Mammary epithelial cell (primary cell): ENCODE measurements at regions of chr12 and their contacts with region 1.

Region 1: DNA sequence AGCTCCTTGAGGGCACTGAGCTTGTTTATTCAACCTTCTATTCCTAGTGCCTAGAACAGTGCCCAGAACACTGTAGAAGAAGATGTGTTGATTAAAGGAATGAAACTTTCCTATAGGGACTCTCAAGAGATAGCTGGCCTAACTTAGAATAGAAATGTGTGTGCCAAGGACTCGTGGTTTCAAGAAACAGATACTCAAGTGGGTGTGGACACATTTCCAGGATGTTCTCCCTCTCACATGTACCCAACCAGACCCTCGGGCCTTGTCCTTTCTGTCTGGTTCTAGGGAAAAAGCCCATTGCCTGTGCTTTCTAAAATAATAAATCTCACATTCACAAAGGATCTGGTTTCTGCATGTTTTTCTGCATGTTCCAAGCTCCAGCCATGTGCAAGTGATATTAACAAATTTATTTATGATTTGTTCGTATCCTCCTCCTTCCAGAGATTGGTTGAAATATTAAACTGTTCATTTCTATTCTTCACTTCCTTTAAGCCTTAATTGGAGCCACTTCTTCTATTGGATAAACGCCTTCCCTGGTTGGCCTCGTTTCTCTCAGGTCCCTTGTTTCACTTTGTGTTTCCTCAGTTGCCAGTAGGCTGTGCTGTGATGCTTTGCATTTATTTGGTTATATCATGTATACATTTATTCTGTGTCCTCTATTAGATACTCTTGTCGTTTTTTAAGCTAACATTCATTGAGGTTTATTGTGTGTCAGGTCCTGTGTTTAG is 89.8 kb downstream of the CRADD start:
- DNase-seq: peak; percentile 61
- H3K4me3 ChIP-seq: no peak overlapping the region
- H3K27ac ChIP-seq: no peak overlapping the region
- H3K4me1 ChIP-seq: peaks cover 6% of the 10 kb centered on the region
- H3K27me3 ChIP-seq: no peaks in the 10 kb centered on the region
- CTCF ChIP-seq: peak; percentile 63

Region 2: GRCh38 chr12:92987362-92987761 is 779.6 kb before region 1 on chr12:
- CTCF ChIA-PET with region 1: no interaction called
- dilution Hi-C with region 1: no loop called
- in situ Hi-C with region 1: no loop called
- intact Hi-C with region 1: loop called (anchors 10 kb)
- DNase-seq: peak; percentile 58
- H3K4me3 ChIP-seq: no peak overlapping the region
- H3K27ac ChIP-seq: no peak overlapping the region
- H3K4me1 ChIP-seq: peaks cover 5% of the 10 kb centered on the region
- H3K27me3 ChIP-seq: no peaks in the 10 kb centered on the region
- CTCF ChIP-seq: peak; percentile 45 to 53

Region 3: GRCh38 chr12:93502802-93503623 is 263.9 kb before region 1 on chr12:
- CTCF ChIA-PET with region 1: no interaction called
- dilution Hi-C with region 1: no loop called
- in situ Hi-C with region 1: no loop called
- intact Hi-C with region 1: loop called (anchors 2 kb)
- DNase-seq: peak; percentile 9
- H3K4me3 ChIP-seq: no peak overlapping the region
- H3K27ac ChIP-seq: no peak overlapping the region
- H3K4me1 ChIP-seq: no peaks in the 10 kb centered on the region
- H3K27me3 ChIP-seq: no peaks in the 10 kb centered on the region
- CTCF ChIP-seq: peak; percentile 74 to 75

Region 4: GRCh38 chr12:93802698-93803423 is 35.9 kb after region 1 on chr12:
- CTCF ChIA-PET with region 1: interaction called, 4 read pairs
- dilution Hi-C with region 1: no loop called
- in situ Hi-C with region 1: no loop called
- intact Hi-C with region 1: loop called (anchors 1 kb)
- DNase-seq: no peak
- H3K4me3 ChIP-seq: no peak overlapping the region
- H3K27ac ChIP-seq: no peak overlapping the region
- H3K4me1 ChIP-seq: peaks cover 33% of the 10 kb centered on the region
- H3K27me3 ChIP-seq: no peaks in the 10 kb centered on the region
- CTCF ChIP-seq: peak in 1 of 2 donors; percentile 31

Region 5: DNA sequence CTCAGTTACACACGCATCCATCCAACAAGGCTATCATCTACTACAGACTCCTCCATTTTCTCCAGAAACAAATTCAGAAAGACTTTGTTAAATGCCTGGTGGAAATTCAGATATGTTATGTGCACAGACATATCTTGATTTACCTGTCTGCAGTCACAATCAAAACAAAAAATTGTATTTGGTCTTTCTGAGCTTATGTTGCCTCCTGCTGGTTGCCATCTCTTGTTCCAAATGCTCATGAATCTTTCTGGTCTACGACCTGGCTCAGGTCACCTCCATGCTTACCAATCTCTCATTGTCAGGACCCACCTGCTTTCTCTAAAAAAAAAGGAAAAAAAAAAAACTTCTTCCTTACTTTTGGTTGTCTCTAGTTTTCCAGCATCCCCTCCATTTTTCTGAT is 212.2 kb after region 1 on chr12:
- CTCF ChIA-PET with region 1: interaction called, 3 read pairs
- dilution Hi-C with region 1: no loop called
- in situ Hi-C with region 1: no loop called
- intact Hi-C with region 1: loop called (anchors 1 kb)
- DNase-seq: peak; percentile 24
- H3K4me3 ChIP-seq: no peak overlapping the region
- H3K27ac ChIP-seq: no peak overlapping the region
- H3K4me1 ChIP-seq: peaks cover 5% of the 10 kb centered on the region
- H3K27me3 ChIP-seq: no peaks in the 10 kb centered on the region
- CTCF ChIP-seq: peak; percentile 27 to 50

Region 6: DNA sequence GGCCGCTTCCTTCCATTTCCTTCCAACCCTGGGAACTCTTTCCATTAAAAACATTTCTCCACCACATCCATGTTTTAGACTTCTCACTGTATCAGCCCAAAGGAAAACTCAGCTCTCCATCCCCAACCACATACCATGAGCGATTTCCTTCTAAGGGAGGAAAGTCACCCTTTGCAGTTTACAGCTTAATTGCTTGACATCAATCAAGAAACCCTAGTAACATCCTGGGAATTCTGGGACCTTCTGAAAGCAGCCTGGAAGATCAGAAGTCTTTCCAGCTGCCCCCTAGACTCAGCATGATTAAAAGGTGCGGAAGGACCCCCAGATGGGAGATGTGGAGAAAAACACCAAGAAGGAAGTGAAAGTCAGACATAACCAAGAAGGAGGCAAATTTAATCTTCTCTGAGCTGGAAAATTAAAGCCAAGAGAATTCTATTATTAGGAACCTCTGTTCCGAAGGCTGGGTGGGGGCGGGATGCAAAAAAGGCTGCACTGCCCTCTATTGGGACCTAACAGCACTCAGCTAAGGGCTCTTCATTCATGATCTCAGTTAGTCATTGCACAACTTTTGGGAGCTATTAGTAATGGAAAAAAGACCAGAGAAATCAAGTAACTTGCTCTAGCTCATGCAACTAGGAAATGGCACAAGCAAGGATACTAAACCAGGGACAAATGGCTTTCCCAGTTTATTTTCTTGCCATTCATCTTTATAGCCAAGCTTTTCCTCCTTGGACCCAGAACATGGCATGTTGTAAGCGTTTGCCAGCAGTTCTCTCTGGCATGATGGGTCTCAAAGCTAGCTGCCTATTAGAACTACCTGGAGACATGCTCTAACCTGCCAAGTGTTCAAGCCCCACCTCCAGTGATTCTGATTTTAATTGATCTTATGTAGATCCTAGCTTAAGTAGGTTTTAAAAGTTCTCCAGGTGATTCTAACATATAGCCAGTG is 308.3 kb after region 1 on chr12:
- CTCF ChIA-PET with region 1: no interaction called
- dilution Hi-C with region 1: no loop called
- in situ Hi-C with region 1: no loop called
- intact Hi-C with region 1: loop called (anchors 1 kb)
- DNase-seq: peak; percentile 79
- H3K4me3 ChIP-seq: no peak overlapping the region
- H3K27ac ChIP-seq: no peak overlapping the region
- H3K4me1 ChIP-seq: peaks cover 4% of the 10 kb centered on the region
- H3K27me3 ChIP-seq: peaks cover 5% of the 10 kb centered on the region
- CTCF ChIP-seq: peak; percentile 81 to 84